Posterior vena cava (tissue), 2 donors: ENCODE measurements at regions of chr15 and their contacts with region 1.

Region 1: GRCh38 chr15:94670438-94671034 is 439.2 kb downstream of the MCTP2 start:
- DNase-seq: no peak

Region 2: GRCh38 chr15:94644433-94644832 is 26.1 kb before region 1 on chr15:
- intact Hi-C with region 1: no loop called
- DNase-seq: no peak

Region 3: DNA sequence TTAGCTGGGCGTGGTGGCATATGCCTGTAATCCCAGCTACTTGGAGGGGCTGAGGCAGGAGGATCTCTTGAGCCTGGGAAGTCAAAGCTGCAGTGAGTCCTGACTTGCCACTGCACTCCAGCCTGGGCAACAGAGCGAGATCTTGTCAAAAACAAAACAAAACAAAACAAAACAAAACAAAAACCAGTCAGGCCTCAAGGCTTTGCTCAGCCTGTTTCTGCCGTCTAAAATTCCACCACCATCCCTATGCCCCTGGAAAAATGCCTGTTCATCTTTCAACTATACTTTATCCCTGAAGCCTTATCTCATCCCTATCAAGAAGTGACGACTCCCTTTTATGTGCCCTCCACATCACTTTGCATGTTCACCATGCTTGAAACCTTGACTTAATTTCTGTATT is 155.7 kb after region 1 on chr15:
- intact Hi-C with region 1: no loop called
- DNase-seq: no peak

Region 4: GRCh38 chr15:94844538-94845389 is 174.2 kb after region 1 on chr15:
- intact Hi-C with region 1: loop called in 1 of 2 experiments (anchors 10 kb)
- DNase-seq: peak; percentile 89

Region 5: DNA sequence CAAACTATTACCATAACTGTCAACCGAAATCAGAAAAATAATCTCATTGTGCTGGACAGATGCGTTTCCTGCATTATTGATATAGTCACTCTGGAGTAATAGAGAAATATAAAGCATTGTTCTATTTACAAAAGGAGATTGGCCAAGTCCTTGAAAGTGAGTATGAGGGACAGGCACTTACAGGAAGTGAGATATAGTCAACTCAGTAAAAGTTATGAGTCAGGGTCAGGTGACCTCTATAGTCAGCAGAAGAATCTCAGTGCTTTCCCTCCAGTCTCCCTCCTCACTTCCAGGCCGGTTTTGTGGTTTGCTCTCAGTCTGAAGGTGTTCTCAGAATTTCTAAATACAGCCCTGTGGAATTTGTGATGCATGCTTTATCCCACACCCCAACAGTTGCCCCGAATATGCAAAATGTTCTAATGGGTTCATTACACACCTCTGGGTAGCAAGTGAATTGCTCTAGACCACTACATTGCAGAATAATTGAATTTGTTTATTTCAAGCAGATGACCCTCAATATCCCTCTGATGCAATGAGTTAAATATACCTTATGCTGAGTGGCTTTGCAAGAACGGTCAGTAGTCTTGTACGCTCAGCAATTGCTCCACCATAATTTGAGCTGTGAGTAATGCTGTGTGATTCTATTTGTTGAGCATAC is 348.5 kb after region 1 on chr15:
- intact Hi-C with region 1: loop called in 1 of 2 experiments (anchors 10 kb)
- DNase-seq: no peak

Region 6: GRCh38 chr15:95208988-95209387 is 538.5 kb after region 1 on chr15:
- intact Hi-C with region 1: no loop called
- DNase-seq: no peak

Region 7: DNA sequence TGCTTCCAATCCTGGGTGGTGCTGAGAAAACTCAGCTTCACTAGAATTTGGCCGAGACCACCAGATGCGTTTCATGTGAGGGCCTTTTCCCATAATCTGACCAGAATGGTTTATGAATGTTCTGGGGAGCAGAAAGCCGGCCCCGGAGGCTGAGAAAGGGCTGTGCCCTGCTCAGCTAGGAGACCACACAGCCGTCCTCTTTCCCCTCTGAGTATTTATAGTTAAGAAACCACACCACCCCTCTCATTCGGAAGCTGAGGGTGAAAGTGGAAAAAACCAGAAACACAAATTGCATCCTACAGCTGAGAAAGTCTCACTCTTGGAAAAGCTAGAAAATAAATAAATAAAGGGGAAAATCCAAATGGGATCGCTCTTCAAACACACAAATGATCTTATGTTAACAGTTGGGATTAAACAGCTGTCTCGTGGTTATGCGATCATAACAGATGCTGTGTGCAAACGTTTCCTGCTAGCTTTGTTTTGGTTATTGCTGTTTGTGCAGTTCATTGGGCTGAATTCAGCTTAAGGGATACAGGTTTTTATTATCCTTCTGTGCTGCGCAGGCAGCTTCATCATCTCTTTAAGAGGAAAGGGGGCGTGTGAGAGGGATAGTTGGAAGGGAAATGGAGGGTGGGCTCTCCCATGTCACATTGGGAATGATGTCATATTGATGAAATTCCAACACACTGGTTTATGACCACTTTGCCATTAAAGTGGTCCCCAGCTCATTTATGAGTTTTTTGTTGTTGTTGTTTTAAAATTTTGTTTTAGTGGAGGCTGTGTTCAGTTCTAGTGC is 633.8 kb after region 1 on chr15:
- intact Hi-C with region 1: no loop called
- DNase-seq: no peak

Region 8: DNA sequence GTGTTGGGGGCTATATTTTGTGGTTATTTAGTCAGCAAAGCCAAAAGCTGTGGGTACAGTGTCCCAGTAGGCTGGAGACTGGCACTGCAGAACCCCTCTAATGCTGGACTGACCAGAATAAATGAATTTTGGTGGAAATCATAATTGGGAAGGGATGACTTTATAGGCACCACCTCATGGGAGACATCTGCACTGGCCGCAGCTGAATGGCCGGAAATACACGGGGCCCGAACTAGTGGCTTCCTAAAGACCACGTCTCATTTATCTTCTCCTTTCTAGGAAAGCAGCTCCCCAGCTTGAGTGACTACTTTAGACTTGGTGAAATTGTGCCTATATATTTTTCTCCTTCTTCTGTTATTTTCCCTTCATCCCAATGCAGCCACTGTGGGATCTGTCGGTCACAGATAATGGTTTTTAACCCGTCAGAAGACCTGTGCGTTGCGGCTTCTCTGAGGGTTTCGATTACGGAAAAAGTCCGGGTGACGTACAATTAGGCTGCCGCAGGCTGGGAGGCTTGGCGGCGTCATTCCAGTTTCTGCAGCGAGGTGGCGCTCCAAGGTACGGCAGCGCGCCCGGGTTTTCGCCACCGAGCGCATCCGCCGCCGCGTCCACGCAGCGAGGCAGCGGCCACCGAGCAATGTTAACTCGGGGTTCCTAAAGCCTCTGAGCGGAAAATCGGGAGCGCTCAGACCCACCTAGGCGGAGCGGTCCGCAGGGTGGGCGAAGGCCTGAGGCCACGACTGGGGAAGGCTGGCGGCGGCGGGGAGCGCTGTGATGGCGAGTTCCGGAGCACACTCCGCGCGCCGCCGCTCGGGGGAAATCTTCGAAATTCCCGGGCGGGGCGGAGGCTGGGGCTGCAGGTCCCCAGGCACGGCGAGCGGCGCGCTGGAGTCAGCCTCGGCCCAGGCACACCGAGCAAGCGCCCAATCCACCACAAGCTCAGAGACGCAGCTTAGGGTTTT is 1686.2 kb after region 1 on chr15:
- intact Hi-C with region 1: loop called in 1 of 2 experiments (anchors 10 kb)
- DNase-seq: peak; percentile 93